CD8-positive, alpha-beta T cell (primary cell): ENCODE measurements at regions of chr3 and their contacts with region 1.

Region 1: GRCh38 chr3:71753630-71754483 is at the start of gene GPR27:
- DNase-seq: peak in 2 of 9 experiments; percentile 33 to 40
- ATAC-seq: peak; percentile 51
- H3K4me3 ChIP-seq: peak within 1 kb of the TSS in 1 of 2 experiments; percentile 33
- H3K4me3 Mint-ChIP-seq: peak within 1 kb of the TSS; percentile 78
- H3K27ac ChIP-seq: no peak within 1 kb of the TSS
- H3K27ac Mint-ChIP-seq: no peak within 1 kb of the TSS
- H3K4me1 ChIP-seq: peaks cover 5% of the 10 kb centered on the region
- H3K4me1 Mint-ChIP-seq: peaks cover 10% of the 10 kb centered on the region
- H3K27me3 ChIP-seq: peaks cover 3 to 15% of the 10 kb centered on the region in 2 experiments
- H3K27me3 Mint-ChIP-seq: peaks cover 31% of the 10 kb centered on the region
- CTCF ChIP-seq: no peak
- total RNA-seq, gene GPR27: 0.28 to 0.30 TPM

Region 2: GRCh38 chr3:71130471-71131374 is 623.1 kb before region 1 on chr3:
- CTCF ChIA-PET with region 1: no interaction called
- POLR2A ChIA-PET with region 1: no interaction called
- intact Hi-C with region 1: no loop called
- DNase-seq: peak; percentile 52 to 90 (median 77)
- ATAC-seq: peak; percentile 74
- H3K4me3 ChIP-seq: peak overlapping the region; percentile 56 to 57
- H3K4me3 Mint-ChIP-seq: peak overlapping the region; percentile 87
- H3K27ac ChIP-seq: peak overlapping the region; percentile 82 to 88
- H3K27ac Mint-ChIP-seq: peak overlapping the region; percentile 93
- H3K4me1 ChIP-seq: peaks cover 57% of the 10 kb centered on the region
- H3K4me1 Mint-ChIP-seq: peaks cover 80% of the 10 kb centered on the region
- H3K27me3 ChIP-seq: no peaks in the 10 kb centered on the region
- H3K27me3 Mint-ChIP-seq: no peaks in the 10 kb centered on the region
- CTCF ChIP-seq: no peak

Region 3: DNA sequence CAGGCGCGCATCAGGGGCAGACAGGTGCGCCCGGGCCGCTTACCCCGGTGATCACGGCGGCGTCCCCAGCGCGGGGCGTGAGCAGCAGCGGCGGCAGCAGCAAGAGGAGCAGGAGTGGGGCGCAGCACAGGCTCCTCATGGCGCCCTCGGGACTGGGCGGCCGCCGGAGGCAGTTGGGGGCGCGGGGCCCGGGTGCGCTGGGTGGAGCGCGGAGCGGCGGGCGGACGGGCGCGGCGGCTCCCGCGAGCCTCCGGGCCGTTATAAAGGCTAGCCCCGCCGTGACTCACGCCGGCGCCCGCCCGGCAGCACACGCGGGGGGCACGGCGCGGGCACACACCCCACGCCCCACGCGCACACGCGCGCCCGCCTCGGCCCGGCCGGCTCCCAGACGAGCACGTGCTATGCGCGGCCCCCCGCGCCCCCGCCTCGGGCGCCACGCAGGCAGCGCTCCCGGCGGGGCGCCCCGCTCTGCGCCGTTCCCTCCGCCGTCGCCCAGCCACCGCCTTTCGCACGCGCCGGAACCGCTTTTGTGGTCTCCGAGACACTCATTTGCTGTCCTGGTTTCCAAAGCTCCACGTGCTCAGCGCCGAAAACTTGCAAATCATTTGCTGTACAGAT is 31.2 kb after region 1 on chr3 and contains the start of gene PROK2:
- CTCF ChIA-PET with region 1: no interaction called
- POLR2A ChIA-PET with region 1: no interaction called
- intact Hi-C with region 1: loop called in 1 of 2 experiments (anchors 2 kb)
- DNase-seq: peak in 4 of 9 experiments; percentile 22 to 48 (median 36)
- ATAC-seq: peak; percentile 71
- H3K4me3 ChIP-seq: peak within 1 kb of the TSS in 1 of 2 experiments; percentile 11
- H3K4me3 Mint-ChIP-seq: peak within 1 kb of the TSS; percentile 76
- H3K27ac ChIP-seq: no peak within 1 kb of the TSS
- H3K27ac Mint-ChIP-seq: no peak within 1 kb of the TSS
- H3K4me1 ChIP-seq: peaks cover 16% of the 10 kb centered on the region
- H3K4me1 Mint-ChIP-seq: peaks cover 23% of the 10 kb centered on the region
- H3K27me3 ChIP-seq: peaks cover 0 to 28% of the 10 kb centered on the region in 2 experiments
- H3K27me3 Mint-ChIP-seq: peaks cover 51% of the 10 kb centered on the region
- CTCF ChIP-seq: no peak
- total RNA-seq, gene PROK2: 0.33 to 0.43 TPM